ENCODE measurements at regions of chr7 and their contacts with region 1.

Region 1: GRCh38 chr7:42940985-42941847 is 9.0 kb downstream of the MRPL32 start:
- DNase-seq: peak; percentile 74 to 79
- ATAC-seq: peak; percentile 51 to 81 (median 60)
- H3K4me3 ChIP-seq: no peak overlapping the region
- H3K27ac ChIP-seq: no peak overlapping the region
- H3K4me1 ChIP-seq: no peaks in the 10 kb centered on the region
- H3K27me3 ChIP-seq: no peaks in the 10 kb centered on the region
- CTCF ChIP-seq: peak; percentile 78

Region 2: GRCh38 chr7:43260980-43261878 is 320.0 kb after region 1 on chr7:
- intact Hi-C with region 1: loop called (anchors 2 to 5 kb)
- DNase-seq: peak; percentile 54 to 72
- ATAC-seq: peak; percentile 69 to 85 (median 78)
- H3K4me3 ChIP-seq: no peak overlapping the region
- H3K27ac ChIP-seq: no peak overlapping the region
- H3K4me1 ChIP-seq: no peaks in the 10 kb centered on the region
- H3K27me3 ChIP-seq: no peaks in the 10 kb centered on the region
- CTCF ChIP-seq: peak; percentile 84

Region 3: GRCh38 chr7:43454936-43455518 is 513.8 kb after region 1 on chr7:
- intact Hi-C with region 1: loop called in 1 of 2 experiments (anchors 10 kb)
- DNase-seq: no peak
- ATAC-seq: no peak
- H3K4me3 ChIP-seq: no peak overlapping the region
- H3K27ac ChIP-seq: no peak overlapping the region
- H3K4me1 ChIP-seq: no peaks in the 10 kb centered on the region
- H3K27me3 ChIP-seq: no peaks in the 10 kb centered on the region
- CTCF ChIP-seq: peak; percentile 27

Region 4: GRCh38 chr7:43721193-43721806 is 780.1 kb after region 1 on chr7:
- intact Hi-C with region 1: loop called in 1 of 2 experiments (anchors 5 kb)
- DNase-seq: no peak
- ATAC-seq: peak in 1 of 4 donors; percentile 49
- H3K4me3 ChIP-seq: no peak overlapping the region
- H3K27ac ChIP-seq: no peak overlapping the region
- H3K4me1 ChIP-seq: peaks cover 30% of the 10 kb centered on the region
- H3K27me3 ChIP-seq: no peaks in the 10 kb centered on the region
- CTCF ChIP-seq: peak; percentile 74

Region 5: GRCh38 chr7:43834463-43835251 is 893.4 kb after region 1 on chr7:
- intact Hi-C with region 1: loop called in 1 of 2 experiments (anchors 10 kb)
- DNase-seq: no peak
- ATAC-seq: no peak
- H3K4me3 ChIP-seq: peak overlapping the region; percentile 26
- H3K27ac ChIP-seq: no peak overlapping the region
- H3K4me1 ChIP-seq: no peaks in the 10 kb centered on the region
- H3K27me3 ChIP-seq: peaks cover 0 to 4% (median 0%) of the 10 kb centered on the region in 3 donors
- CTCF ChIP-seq: no peak